ENCODE measurements at regions of chr3 and their contacts with region 1.

Region 1: DNA sequence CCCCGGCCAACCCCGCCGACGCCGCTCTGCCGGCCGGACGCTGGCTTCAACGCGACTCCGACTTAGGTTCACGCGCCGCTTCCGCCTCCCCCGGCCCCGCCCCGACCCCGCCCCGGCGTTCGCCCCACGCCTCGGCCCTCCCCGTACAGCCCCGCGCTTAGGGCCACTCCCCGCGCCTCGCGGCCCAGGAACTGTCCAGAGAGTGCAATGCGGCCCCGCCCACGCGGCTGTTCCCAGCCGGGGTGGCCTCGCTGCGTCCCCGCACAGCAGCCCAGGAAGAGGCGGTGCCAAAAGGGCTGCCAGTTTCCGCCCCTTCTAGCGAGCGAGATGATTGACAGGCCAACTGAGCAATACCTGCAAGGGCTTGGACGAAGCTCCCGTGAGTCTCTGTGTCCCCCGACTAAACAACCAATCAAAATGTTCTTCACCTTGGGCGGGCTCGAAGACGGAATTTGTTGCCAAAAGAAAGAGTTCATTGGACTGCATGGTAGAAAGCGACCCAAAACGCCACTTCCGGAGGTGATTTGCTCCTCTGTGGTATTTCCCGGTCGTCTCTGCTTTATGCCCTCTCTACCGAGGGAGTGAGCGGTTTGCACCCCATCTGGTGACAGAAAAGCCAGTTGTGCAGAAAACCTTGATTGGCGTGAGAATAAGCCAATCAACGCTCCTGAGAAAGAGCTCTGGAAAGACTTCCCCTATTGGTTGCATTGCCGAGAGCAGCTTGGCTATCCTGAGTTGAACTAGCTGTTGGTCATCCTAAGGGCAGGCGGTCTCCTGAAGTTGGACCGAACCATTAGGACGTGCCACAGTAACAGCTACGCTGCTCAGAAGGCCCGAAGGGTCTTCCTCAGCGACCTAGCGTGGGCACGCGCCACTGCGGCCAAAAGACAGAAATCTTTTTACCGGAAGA is at the start of gene UBP1:
- DNase-seq: peak; percentile 96 to 100 (median 98)
- ATAC-seq: peak; percentile 92
- H3K4me3 ChIP-seq: peak within 1 kb of the TSS; percentile 89
- H3K27ac ChIP-seq: peak within 1 kb of the TSS; percentile 90
- H3K4me1 ChIP-seq: peaks cover 9 to 23% of the 10 kb centered on the region in 2 experiments; a peak in 4 of 5 replicates
- H3K27me3 ChIP-seq: no peaks in the 10 kb centered on the region
- CTCF ChIP-seq: peak in 1 of 3 experiments; percentile 32; a peak in 1 of 6 replicates
- EP300 ChIP-seq: no peak
- POLR2A ChIP-seq: peak; percentile 99
- RAD21 ChIP-seq: no peak
- polyA plus RNA-seq, gene UBP1: 13.6 to 17.4 TPM

Region 2: GRCh38 chr3:32822609-32823498 is 617.7 kb before region 1 on chr3:
- CTCF ChIA-PET with region 1: no interaction called
- POLR2A ChIA-PET with region 1: no interaction called
- in situ Hi-C with region 1: no loop called
- intact Hi-C with region 1: no loop called
- DNase-seq: no peak
- ATAC-seq: no peak
- H3K4me3 ChIP-seq: no peak overlapping the region
- H3K27ac ChIP-seq: no peak overlapping the region
- H3K4me1 ChIP-seq: peaks cover 0 to 8% of the 10 kb centered on the region in 2 experiments; a peak in 2 of 5 replicates
- H3K27me3 ChIP-seq: peaks cover 63 to 78% of the 10 kb centered on the region in 2 experiments
- CTCF ChIP-seq: no peak
- EP300 ChIP-seq: no peak
- POLR2A ChIP-seq: no peak
- RAD21 ChIP-seq: no peak

Region 3: GRCh38 chr3:33426630-33427317 is 13.8 kb before region 1 on chr3:
- CTCF ChIA-PET with region 1: no interaction called
- POLR2A ChIA-PET with region 1: interaction called, 94 read pairs
- in situ Hi-C with region 1: no loop called
- intact Hi-C with region 1: no loop called
- DNase-seq: no peak
- ATAC-seq: no peak; the same call in 2 of the 3 replicates
- H3K4me3 ChIP-seq: no peak overlapping the region
- H3K27ac ChIP-seq: no peak overlapping the region
- H3K4me1 ChIP-seq: peaks cover 3 to 15% of the 10 kb centered on the region in 2 experiments; a peak in 3 of 5 replicates
- H3K27me3 ChIP-seq: no peaks in the 10 kb centered on the region
- CTCF ChIP-seq: no peak
- EP300 ChIP-seq: no peak
- POLR2A ChIP-seq: no peak
- RAD21 ChIP-seq: no peak

Region 4: DNA sequence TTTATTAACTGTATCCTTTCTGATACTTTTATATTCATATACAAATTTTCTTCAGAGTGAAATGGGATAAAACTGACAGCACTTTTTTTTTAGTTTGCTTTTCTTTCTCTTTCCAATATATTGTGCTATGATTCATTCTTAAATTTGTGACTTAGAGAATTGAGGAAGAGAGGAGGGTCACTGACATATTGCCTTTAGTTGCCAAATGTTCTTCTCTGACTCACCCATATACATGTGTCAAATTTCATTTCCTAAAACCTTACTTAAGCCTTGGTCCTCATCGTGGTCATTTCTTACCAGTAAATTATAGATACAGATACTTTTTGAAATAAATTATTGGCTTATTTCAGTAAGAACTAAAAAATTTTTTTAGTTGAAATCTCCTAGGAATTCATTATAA is 223.6 kb after region 1 on chr3:
- CTCF ChIA-PET with region 1: no interaction called
- POLR2A ChIA-PET with region 1: no interaction called
- in situ Hi-C with region 1: no loop called
- intact Hi-C with region 1: no loop called
- DNase-seq: peak in 1 of 4 experiments; percentile 14
- ATAC-seq: no peak
- H3K4me3 ChIP-seq: no peak overlapping the region
- H3K27ac ChIP-seq: no peak overlapping the region
- H3K4me1 ChIP-seq: peaks cover 0 to 10% of the 10 kb centered on the region in 2 experiments; a peak in 4 of 5 replicates
- H3K27me3 ChIP-seq: no peaks in the 10 kb centered on the region
- CTCF ChIP-seq: no peak
- EP300 ChIP-seq: peak; percentile 10; the same call in 1 of the 2 replicates
- POLR2A ChIP-seq: no peak
- RAD21 ChIP-seq: no peak

Measured in K562 (cell line).